Ascending aorta (tissue), 2 donors: ENCODE measurements at regions of chr14 and their contacts with region 1.

Region 1: DNA sequence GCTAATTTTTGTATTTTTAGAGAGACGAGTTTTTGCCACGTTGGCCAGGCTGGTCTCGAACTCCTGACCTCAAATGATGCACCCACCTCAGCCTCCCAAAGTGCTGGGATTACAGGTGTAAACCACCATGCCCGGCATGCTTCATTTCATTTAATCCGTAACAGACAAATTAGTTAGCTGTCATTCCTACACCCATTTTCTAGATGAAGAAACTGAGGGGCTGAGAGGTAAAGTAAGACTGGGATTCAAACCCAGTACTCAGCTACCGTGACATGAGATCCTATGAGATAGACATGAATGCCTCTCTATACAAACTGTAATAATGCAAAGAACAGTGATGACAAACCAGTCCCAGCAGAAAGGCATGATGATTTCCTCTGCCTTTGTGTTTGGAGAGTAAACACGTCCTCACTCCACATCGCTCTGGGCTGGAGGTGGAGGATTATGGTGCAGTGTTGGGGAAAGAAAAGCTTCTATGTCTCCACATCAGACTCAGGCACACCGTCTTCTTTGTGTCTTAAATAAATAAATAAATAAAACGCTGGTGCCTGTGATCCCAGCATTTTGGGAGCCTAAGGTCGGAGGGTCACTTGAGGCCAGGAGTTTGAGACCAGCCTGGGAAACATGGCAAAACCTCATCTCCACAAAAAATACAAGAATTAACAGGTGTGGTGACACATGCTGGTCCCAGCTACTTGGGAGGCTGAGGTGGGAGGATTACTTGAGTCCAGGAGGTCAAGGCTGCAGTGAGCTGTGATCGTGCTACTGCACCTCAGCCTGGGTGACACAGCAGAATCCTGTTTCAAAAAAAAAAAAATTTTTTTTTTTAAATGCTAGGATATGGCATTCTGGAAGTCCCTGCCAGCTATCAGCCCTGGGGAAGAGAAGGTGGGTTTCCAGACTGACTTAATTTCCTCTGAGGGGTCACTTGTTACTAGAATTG is 10.5 kb downstream of the VSX2 start:
- DNase-seq: no peak
- H3K4me3 ChIP-seq: no peak overlapping the region
- H3K27ac ChIP-seq: no peak overlapping the region
- H3K4me1 ChIP-seq: peaks cover 0 to 2% of the 10 kb centered on the region in 2 donors
- H3K27me3 ChIP-seq: no peaks in the 10 kb centered on the region
- CTCF ChIP-seq: no peak

Region 2: DNA sequence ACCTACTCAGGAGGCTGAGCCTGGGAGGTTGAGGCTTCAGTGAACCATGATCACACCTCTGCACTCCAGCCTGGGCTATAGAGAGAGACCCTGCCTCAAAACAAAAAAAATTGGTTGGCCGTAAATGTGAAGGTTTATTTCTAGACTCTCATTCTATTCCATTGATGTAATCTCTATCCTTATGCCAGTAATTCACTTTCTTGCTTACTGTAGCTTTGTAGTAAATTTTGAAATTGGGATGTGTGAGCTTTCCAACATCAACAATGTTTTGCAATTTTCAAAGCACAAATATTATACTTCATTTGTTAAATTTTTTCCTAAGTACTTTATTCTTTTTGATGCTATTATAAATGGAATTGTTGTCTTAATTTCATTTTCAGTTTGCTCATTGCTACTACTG is 140.3 kb before region 1 on chr14:
- intact Hi-C with region 1: loop called (anchors 2 kb)
- DNase-seq: no peak
- H3K4me3 ChIP-seq: no peak overlapping the region
- H3K27ac ChIP-seq: peak overlapping the region in 1 of 2 donors; percentile 31
- H3K4me1 ChIP-seq: peaks cover 0 to 3% of the 10 kb centered on the region in 2 donors
- H3K27me3 ChIP-seq: no peaks in the 10 kb centered on the region
- CTCF ChIP-seq: no peak

Region 3: GRCh38 chr14:74217672-74218448 is 31.8 kb before region 1 on chr14:
- intact Hi-C with region 1: loop called (anchors 1 kb)
- DNase-seq: peak in 1 of 2 donors; percentile 72
- H3K4me3 ChIP-seq: peak overlapping the region; percentile 5 to 42
- H3K27ac ChIP-seq: no peak overlapping the region
- H3K4me1 ChIP-seq: no peaks in the 10 kb centered on the region
- H3K27me3 ChIP-seq: peaks cover 4% of the 10 kb centered on the region
- CTCF ChIP-seq: peak; percentile 75 to 90 (median 88)

Region 4: DNA sequence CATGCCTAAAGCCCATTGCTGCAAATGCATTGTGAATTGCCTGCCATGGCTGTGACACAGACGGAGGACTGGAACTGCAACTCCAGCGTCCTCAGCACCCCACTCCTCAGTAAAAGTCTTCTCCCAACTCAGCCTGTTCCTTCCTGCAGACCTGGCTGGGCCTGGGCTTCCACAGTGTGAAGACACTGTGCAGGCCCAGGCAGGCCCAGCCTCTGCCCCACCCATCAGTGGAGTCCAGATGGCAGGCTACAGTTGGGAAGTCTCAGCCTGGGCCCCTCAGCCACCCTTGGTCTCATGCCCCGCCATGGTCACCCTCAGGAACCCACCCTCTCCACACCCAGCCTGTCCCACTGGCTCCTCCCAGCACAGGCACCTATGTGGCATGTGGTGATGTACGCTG is 11.6 kb after region 1 on chr14:
- intact Hi-C with region 1: no loop called
- DNase-seq: no peak
- H3K4me3 ChIP-seq: no peak overlapping the region
- H3K27ac ChIP-seq: no peak overlapping the region
- H3K4me1 ChIP-seq: peaks cover 5 to 10% of the 10 kb centered on the region in 2 donors
- H3K27me3 ChIP-seq: peaks cover 4% of the 10 kb centered on the region
- CTCF ChIP-seq: no peak

Region 5: DNA sequence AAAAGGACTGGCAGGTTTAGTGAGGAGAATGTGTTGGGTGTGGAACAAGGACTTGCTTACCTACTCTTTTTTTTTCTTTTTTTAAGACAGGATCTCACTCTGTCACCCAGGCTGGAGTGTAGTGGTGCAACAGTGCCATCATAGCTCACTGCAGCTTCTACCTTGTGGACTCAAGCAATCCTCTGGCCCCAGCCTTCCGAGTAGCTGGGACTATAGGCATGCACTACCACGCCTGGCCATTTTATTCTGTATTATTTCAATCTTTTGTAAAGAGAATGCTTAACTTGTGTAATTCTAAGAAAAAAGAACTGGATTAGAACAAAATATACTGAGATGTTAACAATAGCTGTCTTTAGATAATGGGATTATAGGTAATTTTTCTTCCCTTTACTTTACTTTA is 96.6 kb after region 1 on chr14:
- intact Hi-C with region 1: no loop called
- DNase-seq: no peak
- H3K4me3 ChIP-seq: no peak overlapping the region
- H3K27ac ChIP-seq: no peak overlapping the region
- H3K4me1 ChIP-seq: no peaks in the 10 kb centered on the region
- H3K27me3 ChIP-seq: no peaks in the 10 kb centered on the region
- CTCF ChIP-seq: no peak

Region 6: GRCh38 chr14:75050852-75051554 is 801.3 kb after region 1 on chr14 and contains the start of gene MLH3:
- intact Hi-C with region 1: no loop called
- DNase-seq: peak; percentile 33 to 87
- H3K4me3 ChIP-seq: peak within 1 kb of the TSS; percentile 62 to 76
- H3K27ac ChIP-seq: peak within 1 kb of the TSS; percentile 90 to 91
- H3K4me1 ChIP-seq: peaks cover 3 to 22% of the 10 kb centered on the region in 2 donors
- H3K27me3 ChIP-seq: no peaks in the 10 kb centered on the region
- CTCF ChIP-seq: no peak
- total RNA-seq, gene MLH3: 23.9 TPM